GM10248 (cell line): ENCODE measurements at regions of chr19 and their contacts with region 1.

Region 1: GRCh38 chr19:49200238-49200862 is 42.8 kb downstream of the TRPM4 start:
- DNase-seq: no peak
- CTCF ChIP-seq: no peak

Region 2: GRCh38 chr19:49133621-49134454 is 66.5 kb before region 1 on chr19:
- CTCF ChIA-PET with region 1: no interaction called
- POLR2A ChIA-PET with region 1: no interaction called
- DNase-seq: no peak
- CTCF ChIP-seq: no peak

Region 3: GRCh38 chr19:49148784-49149651 is 51.3 kb before region 1 on chr19:
- CTCF ChIA-PET with region 1: interaction called, 13 read pairs
- POLR2A ChIA-PET with region 1: no interaction called
- DNase-seq: peak; percentile 86
- CTCF ChIP-seq: no peak

Region 4: GRCh38 chr19:49186108-49186507 is 14.2 kb before region 1 on chr19:
- CTCF ChIA-PET with region 1: interaction called, 27 read pairs
- POLR2A ChIA-PET with region 1: no interaction called
- DNase-seq: no peak
- CTCF ChIP-seq: no peak

Region 5: DNA sequence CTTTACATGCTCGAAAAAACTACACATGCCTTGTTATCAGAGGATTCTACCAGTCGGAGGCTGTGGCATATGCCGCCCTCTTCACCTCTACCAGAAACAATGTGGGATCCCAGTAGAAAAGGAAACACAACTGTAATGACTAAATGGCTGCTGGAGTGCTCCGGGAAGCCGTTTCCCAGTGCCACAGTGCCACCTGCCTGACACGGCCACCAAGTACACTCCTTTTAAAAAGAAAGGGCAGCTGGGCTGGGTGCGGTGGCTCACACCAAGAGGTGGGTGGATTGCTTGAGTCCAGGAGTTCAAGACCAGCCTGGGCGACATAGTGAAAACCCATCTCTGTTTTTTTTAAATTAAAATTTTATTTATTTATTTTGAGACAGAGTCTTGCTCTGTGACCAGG is 24.5 kb after region 1 on chr19:
- CTCF ChIA-PET with region 1: interaction called, 18 read pairs
- POLR2A ChIA-PET with region 1: no interaction called
- DNase-seq: no peak
- CTCF ChIP-seq: peak; percentile 32

Region 6: DNA sequence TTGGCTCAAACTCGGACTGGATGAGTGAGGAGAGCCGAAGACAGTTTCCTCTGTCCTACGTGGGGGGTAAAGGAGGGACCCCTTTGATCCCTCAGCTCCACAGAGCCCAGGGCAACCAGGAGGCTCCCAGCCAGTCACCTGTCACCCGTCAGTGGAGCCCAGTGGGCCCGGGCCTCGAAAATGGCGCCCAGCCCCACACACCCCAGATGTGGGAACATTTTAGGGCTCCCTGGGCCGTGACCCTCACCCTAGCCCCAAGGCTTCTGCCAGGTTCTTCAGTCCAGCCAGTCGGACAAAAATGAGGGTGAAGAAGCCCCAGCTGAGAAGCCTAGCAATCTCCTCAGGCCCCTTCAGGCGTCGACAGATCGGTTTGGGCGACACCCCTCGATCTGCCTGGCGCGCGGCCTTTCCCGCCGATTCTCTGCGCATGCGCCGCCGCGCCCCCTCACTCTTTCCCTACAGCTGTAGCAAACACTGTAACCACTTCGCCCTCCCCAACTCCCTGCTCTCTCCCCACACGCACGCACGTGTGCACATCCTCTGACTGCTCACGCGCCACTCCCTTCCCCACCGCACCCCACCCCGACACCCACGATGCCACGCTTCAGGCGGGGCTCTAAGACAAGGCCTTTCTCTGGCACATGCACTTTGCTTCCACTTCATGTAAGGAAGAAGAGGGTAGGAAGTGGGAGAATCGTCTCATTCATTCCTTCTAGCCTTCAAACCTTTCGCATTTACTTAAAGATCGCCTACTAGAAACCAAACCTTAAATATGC is 124.6 kb after region 1 on chr19 and contains the start of gene SLC6A16:
- CTCF ChIA-PET with region 1: no interaction called
- POLR2A ChIA-PET with region 1: no interaction called
- DNase-seq: peak; percentile 10
- CTCF ChIP-seq: no peak